Sigmoid colon (tissue), 7 donors: ENCODE measurements at regions of chr17 and their contacts with region 1.

Region 1: GRCh38 chr17:68771867-68772515 is 170.8 kb upstream of the FAM20A start:
- DNase-seq: no peak
- H3K4me3 ChIP-seq: peak overlapping the region in 1 of 4 donors; percentile 15
- H3K27ac ChIP-seq: peak overlapping the region in 3 of 4 donors; percentile 3 to 47 (median 5)
- H3K4me1 ChIP-seq: peaks cover 0 to 9% (median 0%) of the 10 kb centered on the region in 4 donors
- H3K27me3 ChIP-seq: no peaks in the 10 kb centered on the region
- CTCF ChIP-seq: peak in 2 of 4 experiments; percentile 26 to 46
- EP300 ChIP-seq: no peak
- POLR2A ChIP-seq: no peak

Region 2: GRCh38 chr17:69250641-69251040 is 478.6 kb after region 1 on chr17:
- intact Hi-C with region 1: loop called (anchors 5 kb)
- DNase-seq: no peak
- H3K4me3 ChIP-seq: no peak overlapping the region
- H3K27ac ChIP-seq: no peak overlapping the region
- H3K4me1 ChIP-seq: no peaks in the 10 kb centered on the region
- H3K27me3 ChIP-seq: no peaks in the 10 kb centered on the region
- CTCF ChIP-seq: no peak
- EP300 ChIP-seq: no peak
- POLR2A ChIP-seq: no peak